Lower leg skin (tissue), 4 donors: ENCODE measurements at regions of chr20 and their contacts with region 1.

Region 1: DNA sequence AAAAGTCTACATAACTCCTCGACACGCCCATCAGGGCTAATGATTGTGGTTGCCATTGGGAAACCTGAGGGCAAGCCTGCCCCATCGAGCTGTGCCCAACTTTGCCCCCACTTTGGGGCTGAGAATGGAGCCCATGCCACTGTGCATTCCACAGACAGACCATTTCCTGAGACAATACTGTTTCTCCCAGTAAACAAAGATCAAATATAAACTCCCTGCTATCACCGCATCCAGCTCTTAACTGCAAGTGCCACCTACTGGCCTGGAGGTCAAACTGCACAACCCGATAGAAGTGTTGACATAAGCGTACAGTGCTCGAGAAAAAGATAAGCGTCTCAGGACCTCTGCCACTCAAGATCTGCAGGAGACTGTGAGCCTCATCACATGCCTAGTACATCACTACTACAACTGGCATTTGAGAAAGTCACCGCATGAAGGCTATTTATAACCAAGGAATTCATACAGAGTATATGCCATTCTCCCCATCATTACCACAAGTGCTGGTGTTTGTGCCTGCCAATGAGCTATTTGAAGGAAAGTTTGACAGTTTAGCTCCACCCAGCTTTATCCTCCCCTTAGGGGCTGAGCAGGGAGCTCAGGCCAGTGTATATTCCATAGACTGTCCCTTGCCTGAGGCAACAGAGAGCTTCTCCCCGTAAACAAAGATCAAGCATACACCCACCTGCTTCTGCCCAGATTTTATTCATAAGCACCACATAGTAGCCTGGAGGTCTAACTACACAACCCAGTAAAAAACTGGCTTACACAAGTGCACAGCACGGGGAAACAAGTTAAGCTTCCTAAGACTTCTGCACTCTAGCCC is 4.5 kb upstream of the DEFB126 start:
- DNase-seq: no peak
- H3K4me3 ChIP-seq: no peak overlapping the region
- CTCF ChIP-seq: no peak
- POLR2A ChIP-seq: no peak

Region 2: DNA sequence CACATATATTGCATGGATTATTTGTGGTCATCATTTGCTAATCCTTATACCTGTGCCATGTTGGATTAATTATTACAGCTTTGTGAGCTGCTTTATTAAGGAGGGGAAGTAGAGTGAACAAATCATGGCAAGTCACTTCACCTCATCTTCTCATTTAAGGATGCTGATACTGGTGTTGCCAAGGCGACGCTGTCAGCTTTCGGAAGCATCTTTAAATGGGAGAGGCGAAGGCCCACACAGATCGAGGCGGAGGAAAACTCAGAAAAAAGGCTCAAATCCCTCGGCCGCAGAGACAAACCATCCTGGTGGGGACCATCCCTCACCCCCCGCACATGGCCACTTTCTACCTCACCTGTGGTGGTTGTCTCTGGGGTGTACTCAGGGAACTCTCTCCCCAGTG is 730.4 kb after region 1 on chr20:
- intact Hi-C with region 1: no loop called
- DNase-seq: no peak
- H3K4me3 ChIP-seq: no peak overlapping the region
- CTCF ChIP-seq: no peak
- POLR2A ChIP-seq: no peak

Region 3: DNA sequence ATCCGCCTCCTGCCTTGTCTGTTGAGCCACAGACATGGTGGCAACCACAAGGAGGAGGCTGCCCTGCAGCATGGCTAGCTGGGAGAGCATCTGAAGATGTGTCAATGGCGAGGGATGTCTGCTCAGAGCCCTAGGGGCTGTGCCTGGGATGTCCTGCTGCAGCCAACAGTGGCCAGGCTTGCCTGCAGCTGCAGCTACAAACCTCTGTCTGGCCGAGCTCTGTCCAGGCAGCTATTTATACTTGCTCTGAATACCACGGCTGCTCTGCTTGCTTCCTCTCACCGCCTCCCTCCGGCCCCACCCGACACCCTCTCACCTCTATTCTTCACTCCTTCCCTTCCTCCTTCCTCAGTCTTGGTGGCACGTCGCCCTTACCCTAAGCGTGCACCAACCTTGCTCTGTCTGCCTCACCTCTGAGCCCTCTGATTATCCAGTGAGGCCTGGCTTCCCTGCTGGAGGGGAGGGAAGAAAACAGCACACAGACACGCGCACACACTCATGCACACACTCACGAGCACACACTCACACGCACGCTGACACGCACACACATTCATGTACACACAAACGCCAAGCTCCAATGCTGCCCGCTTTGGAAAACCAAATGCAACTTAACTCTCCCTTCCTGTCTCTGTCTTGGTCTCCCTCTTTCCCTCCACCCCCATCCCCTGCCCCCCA is 778.4 kb after region 1 on chr20 and contains the start of gene ANGPT4:
- intact Hi-C with region 1: loop called (anchors 5 kb)
- DNase-seq: peak in 1 of 2 donors; percentile 68
- H3K4me3 ChIP-seq: no peak within 1 kb of the TSS
- CTCF ChIP-seq: no peak
- POLR2A ChIP-seq: no peak
- total RNA-seq, gene ANGPT4: 0.80 to 4.2 (median 1.7) TPM